Activated CD4-positive, alpha-beta memory T cell treated with anti-CD3 and anti-CD28 coated beads for 36 hours (primary cell): ENCODE measurements at regions of chr3 and their contacts with region 1.

Region 1: GRCh38 chr3:188914552-188914951 is 257.2 kb upstream of the TPRG1 start:
- DNase-seq: peak; percentile 23
- H3K4me3 Mint-ChIP-seq: no peak overlapping the region
- H3K27ac Mint-ChIP-seq: peak overlapping the region; percentile 86
- H3K4me1 Mint-ChIP-seq: peaks cover 43% of the 10 kb centered on the region
- H3K27me3 Mint-ChIP-seq: no peaks in the 10 kb centered on the region

Region 2: GRCh38 chr3:188061133-188061532 is 853.4 kb before region 1 on chr3:
- CTCF ChIA-PET with region 1: no interaction called
- POLR2A ChIA-PET with region 1: no interaction called
- intact Hi-C with region 1: loop called (anchors 1 kb)
- DNase-seq: peak; percentile 81
- H3K4me3 Mint-ChIP-seq: peak overlapping the region; percentile 44
- H3K27ac Mint-ChIP-seq: peak overlapping the region; percentile 80
- H3K4me1 Mint-ChIP-seq: peaks cover 35% of the 10 kb centered on the region
- H3K27me3 Mint-ChIP-seq: no peaks in the 10 kb centered on the region

Region 3: DNA sequence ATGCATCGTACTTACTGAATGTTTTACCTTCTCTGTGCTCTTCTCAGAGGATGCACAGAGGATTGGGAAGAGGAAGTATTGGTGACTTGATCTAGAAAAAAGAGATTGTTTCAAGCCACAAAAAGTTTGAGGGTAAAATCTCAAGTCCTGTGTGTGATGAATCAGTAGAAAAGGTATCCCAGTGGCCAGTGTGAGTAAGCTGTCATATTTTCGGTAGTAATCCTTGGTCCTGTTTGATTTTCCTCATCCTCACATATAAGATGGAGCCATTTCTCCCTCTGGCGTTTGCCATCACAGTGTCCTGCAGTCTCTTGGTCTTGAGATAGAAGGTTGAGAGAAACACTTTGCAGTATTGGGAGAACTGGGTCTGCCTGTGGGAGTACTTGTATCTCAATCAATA is 593.8 kb before region 1 on chr3:
- CTCF ChIA-PET with region 1: no interaction called
- POLR2A ChIA-PET with region 1: no interaction called
- intact Hi-C with region 1: loop called (anchors 5 kb)
- DNase-seq: no peak
- H3K4me3 Mint-ChIP-seq: no peak overlapping the region
- H3K27ac Mint-ChIP-seq: no peak overlapping the region
- H3K4me1 Mint-ChIP-seq: peaks cover 58% of the 10 kb centered on the region
- H3K27me3 Mint-ChIP-seq: peaks cover 2% of the 10 kb centered on the region

Region 4: DNA sequence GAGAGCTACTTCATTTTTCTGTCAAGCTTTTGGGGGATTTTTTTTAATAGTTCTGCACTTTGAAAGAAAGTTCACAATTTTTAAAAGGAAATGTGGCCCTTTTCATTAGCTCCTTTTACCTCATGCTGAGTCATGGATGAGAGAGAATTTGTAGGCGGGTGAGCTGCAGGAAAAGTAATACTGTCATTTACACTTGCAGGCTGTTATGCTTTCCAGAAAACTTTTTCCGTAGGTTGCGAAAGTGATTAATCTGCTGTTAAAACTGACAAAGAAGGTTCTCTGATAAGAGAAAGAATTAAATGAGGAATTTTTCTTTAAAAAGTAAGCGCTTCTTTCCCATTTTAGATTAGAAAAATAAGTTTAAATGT is 330.4 kb before region 1 on chr3:
- CTCF ChIA-PET with region 1: no interaction called
- POLR2A ChIA-PET with region 1: no interaction called
- intact Hi-C with region 1: loop called (anchors 1 kb)
- DNase-seq: peak; percentile 31
- H3K4me3 Mint-ChIP-seq: no peak overlapping the region
- H3K27ac Mint-ChIP-seq: no peak overlapping the region
- H3K4me1 Mint-ChIP-seq: peaks cover 13% of the 10 kb centered on the region
- H3K27me3 Mint-ChIP-seq: no peaks in the 10 kb centered on the region

Region 5: DNA sequence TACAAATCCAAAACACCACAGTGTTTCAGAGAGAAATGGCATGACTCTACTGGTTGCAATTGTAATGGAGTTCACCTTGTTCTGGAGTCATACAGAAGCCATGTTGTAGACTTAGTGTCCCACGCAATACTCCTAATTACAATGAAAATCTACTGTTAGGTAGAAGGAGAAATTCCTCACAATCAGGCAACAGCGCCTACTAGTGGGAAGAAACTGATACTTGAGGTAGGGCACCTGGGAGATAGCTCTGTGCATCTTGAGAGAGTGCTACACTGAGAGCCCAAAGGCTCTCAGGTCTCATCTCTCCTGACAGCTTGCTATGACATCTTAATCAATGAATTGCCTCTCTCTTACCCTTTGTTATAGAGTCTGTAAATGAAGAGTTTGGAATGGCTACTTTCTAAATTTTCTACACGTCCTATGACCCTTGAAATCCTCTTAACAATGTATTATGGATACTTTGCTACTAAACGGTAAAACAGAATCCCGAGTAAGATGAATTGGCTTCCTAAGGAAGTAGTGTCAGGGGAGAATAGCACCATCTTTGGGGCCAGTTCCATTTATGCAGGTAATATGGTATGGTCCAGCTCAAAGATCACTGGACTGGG is 165.4 kb before region 1 on chr3:
- CTCF ChIA-PET with region 1: interaction called, 6 read pairs
- POLR2A ChIA-PET with region 1: interaction called, 3 read pairs
- intact Hi-C with region 1: loop called (anchors 1 kb)
- DNase-seq: peak; percentile 56
- H3K4me3 Mint-ChIP-seq: no peak overlapping the region
- H3K27ac Mint-ChIP-seq: no peak overlapping the region
- H3K4me1 Mint-ChIP-seq: peaks cover 29% of the 10 kb centered on the region
- H3K27me3 Mint-ChIP-seq: no peaks in the 10 kb centered on the region

Region 6: DNA sequence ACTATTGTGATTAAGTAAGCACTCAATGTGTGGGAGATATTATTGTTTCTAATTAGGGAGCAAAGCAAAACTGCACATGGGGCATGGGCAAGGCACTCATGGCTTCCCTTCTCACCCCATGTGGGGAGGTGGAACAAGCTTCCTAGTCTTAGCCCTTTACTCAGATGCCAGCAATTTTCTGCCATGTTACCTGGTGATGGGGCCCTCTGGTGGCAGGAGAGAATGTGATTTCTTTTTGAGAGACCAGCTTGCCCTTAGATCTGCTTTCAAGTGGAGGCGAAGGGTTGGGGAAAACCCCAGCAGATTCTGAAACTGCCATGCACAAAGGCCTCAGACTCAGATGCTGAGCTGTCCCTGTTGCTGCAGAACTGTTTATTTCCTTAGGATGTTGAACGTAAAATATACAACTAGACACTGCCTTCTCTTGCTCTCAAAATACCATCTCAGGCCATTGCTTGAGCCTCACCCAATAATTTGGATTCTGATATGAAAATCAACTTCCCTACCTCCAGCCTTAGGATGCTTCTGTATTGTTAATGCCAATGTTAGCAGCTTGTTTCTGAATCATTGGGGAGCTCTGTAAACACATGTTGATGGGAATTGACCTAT is 127.0 kb after region 1 on chr3:
- CTCF ChIA-PET with region 1: interaction called, 6 read pairs
- POLR2A ChIA-PET with region 1: interaction called, 3 read pairs
- intact Hi-C with region 1: loop called (anchors 1 kb)
- DNase-seq: peak; percentile 86
- H3K4me3 Mint-ChIP-seq: no peak overlapping the region
- H3K27ac Mint-ChIP-seq: peak overlapping the region; percentile 23
- H3K4me1 Mint-ChIP-seq: peaks cover 37% of the 10 kb centered on the region
- H3K27me3 Mint-ChIP-seq: no peaks in the 10 kb centered on the region